ENCODE measurements at regions of chr17 and their contacts with region 1.

Region 1: DNA sequence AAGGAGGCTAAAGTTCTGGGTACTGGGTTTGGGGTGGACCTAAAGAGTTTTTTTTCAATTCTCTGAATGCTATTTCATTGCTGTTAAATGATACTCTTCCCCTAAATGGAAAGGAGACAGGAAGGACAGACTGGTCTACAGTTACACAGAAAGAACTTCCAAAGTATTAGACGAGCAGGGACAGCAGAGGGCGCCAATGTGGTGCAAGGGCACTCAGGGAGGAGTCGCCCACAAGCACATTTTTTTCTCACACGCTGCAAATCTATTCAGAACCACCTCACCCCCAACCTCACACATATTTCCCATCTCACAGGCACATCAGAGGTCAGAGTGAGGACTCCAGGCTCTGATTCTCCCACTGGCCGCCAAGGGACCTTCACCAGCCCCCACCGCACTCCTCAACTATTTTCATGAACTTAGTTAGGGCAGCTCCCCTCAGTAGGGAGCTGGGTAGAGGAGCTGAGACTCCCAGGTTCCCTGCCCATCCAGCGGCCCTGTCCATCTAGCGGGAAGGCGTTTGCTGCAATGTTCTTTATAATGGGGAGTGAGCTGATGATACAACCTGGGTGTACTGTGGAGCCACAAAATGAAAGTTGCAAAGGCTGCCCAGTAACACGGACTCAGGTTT is 6.8 kb upstream of the CA4 start:
- DNase-seq: peak; percentile 87
- H3K4me3 ChIP-seq: no peak overlapping the region
- H3K27ac ChIP-seq: no peak overlapping the region
- H3K4me1 ChIP-seq: peaks cover 17% of the 10 kb centered on the region
- CTCF ChIP-seq: peak; percentile 94

Region 2: DNA sequence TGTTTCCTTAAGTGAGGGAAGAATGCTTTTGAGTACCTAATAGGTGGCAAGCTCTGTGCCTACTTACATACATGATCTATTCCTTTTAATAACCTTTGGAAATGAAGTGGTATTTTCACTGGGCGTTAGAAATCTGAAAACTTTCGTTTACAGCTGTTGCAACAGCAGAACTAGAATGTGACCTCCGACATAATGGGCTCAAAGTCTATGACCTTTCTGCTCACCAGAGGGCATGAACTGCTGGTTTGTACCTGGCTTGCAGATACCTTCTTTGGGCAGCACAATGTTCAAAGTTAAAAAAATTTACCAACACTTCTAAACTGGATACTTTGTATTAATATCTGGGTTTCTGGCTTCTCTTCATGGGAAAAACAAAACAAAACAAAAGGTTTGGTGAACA is 31.0 kb after region 1 on chr17:
- CTCF ChIA-PET with region 1: no interaction called
- POLR2A ChIA-PET with region 1: no interaction called
- intact Hi-C with region 1: loop called (anchors 2 kb)
- DNase-seq: no peak
- H3K4me3 ChIP-seq: no peak overlapping the region
- H3K27ac ChIP-seq: no peak overlapping the region
- H3K4me1 ChIP-seq: peaks cover 10% of the 10 kb centered on the region
- CTCF ChIP-seq: no peak

Region 3: GRCh38 chr17:60435244-60436167 is 292.5 kb after region 1 on chr17:
- CTCF ChIA-PET with region 1: interaction called, 3 read pairs
- POLR2A ChIA-PET with region 1: interaction called, 3 read pairs
- intact Hi-C with region 1: loop called (anchors 10 kb)
- DNase-seq: peak; percentile 70
- H3K4me3 ChIP-seq: no peak overlapping the region
- H3K27ac ChIP-seq: no peak overlapping the region
- H3K4me1 ChIP-seq: no peaks in the 10 kb centered on the region
- CTCF ChIP-seq: peak; percentile 92

Measured in OCI-LY7 (cell line).